ENCODE measurements at regions of chr1 and their contacts with region 1.

Region 1: DNA sequence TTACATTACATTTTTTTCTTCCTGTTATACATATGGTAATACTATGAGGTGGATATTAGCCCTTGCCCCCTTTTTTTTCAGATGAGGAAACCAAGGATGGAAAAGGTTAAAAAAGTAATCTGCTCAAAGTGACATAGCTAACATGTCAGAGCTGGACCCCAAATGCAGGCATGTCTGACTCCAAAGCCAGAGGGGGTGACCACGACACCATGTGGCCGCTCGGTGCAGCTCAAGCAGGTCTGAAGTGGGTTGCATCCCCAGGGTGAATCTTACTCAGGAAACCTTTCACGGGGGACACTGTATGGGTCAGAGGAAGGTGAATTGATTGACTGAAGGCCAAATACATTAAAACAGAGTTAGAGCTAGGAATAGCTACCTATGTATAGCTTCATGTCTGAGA is 34.8 kb downstream of the CD34 start:
- DNase-seq: no peak
- H3K4me3 ChIP-seq: no peak overlapping the region
- H3K4me3 Mint-ChIP-seq: peak overlapping the region in 1 of 8 donors; percentile 59
- H3K27ac ChIP-seq: no peak overlapping the region
- H3K27ac Mint-ChIP-seq: peak overlapping the region in 2 of 7 donors; percentile 18 to 65
- H3K4me1 ChIP-seq: peaks cover 45% of the 10 kb centered on the region
- H3K4me1 Mint-ChIP-seq: peaks cover 40 to 59% (median 47%) of the 10 kb centered on the region in 4 donors
- H3K27me3 ChIP-seq: no peaks in the 10 kb centered on the region
- H3K27me3 Mint-ChIP-seq: no peaks in the 10 kb centered on the region

Region 2: DNA sequence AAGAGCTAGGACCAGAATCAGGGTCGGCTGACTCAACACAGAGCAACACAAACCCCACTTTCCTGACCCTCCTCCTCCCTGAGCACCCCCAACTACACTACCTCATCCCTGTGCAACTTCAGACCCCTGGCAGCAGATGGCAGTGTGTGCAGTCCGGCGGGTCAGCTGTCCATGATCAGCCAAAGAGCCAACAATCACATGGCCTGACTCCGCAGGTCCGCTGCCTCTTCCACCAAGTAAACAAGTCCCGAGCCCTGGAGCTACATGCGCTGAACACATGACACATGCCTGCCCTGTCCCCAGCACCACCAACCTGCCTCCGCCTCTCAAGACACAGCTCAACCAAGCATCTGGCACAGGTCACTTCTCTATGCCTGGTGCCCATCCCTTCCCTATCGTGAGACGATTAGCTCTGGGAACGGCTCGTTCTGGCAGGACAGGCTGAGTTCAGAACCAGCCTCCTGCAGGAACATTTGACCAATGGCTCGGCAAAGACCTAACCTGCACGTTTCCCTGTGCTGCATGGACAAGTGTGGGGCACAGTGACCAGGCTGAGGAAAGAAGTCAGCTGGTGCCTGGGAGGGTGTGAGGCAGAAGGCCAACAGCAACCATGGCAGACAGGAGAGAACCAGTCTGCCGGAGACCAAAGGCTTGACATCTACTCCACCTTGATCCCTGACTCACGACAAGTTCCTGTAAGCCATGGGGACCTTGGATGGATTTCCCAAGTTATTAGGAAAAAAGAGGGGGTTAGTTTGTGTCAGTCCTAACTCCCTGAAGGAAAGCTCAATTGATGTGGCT is 64.0 kb before region 1 on chr1:
- CTCF ChIA-PET with region 1: interaction called, 10 read pairs
- POLR2A ChIA-PET with region 1: no interaction called
- intact Hi-C with region 1: no loop called
- DNase-seq: no peak
- H3K4me3 ChIP-seq: no peak overlapping the region
- H3K4me3 Mint-ChIP-seq: peak overlapping the region in 1 of 8 donors; percentile 17
- H3K27ac ChIP-seq: no peak overlapping the region
- H3K27ac Mint-ChIP-seq: peak overlapping the region in 6 of 7 donors; percentile 13 to 85 (median 61)
- H3K4me1 ChIP-seq: peaks cover 75% of the 10 kb centered on the region
- H3K4me1 Mint-ChIP-seq: peaks cover 51 to 90% (median 74%) of the 10 kb centered on the region in 4 donors
- H3K27me3 ChIP-seq: no peaks in the 10 kb centered on the region
- H3K27me3 Mint-ChIP-seq: no peaks in the 10 kb centered on the region

Region 3: DNA sequence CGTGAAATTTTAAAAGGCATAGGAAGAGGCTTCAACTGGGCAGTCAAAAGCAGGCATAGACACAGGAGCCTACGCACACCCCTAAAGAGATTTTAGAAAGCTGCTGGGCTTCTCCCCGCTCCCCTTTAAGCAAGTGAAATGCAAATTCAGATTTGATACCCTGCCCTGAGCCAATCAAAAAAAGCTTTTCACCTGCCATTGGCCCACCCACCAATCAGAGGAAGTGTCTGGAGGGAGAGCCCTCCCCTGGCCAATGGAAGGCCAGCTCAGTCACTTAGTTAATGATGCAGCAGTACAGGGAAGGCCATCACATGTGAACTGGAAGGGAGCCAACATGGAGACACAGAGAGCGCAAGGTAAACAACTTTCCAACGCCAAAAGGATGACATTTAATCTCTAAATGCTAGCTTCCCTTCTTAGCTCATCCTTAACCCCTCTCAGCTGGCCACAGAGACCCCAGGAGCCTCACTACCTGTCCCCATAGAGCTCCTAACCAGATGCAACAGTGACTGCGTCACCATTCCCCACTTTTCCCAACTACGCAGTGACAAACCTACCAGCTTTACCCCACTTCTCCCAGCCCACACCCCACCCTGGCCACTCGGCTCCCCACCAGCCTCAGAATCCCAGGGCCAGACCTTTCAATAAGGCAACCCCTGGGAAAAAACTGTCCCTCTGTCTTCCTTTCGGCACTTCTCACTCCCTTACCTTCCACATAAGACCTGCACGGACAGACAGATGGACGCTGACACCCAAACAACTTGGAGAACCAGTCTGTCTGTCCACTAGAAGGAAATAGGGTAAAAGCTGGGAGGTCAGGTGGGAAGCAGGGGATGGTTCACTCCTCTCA is 53.3 kb before region 1 on chr1:
- CTCF ChIA-PET with region 1: interaction called, 494 read pairs
- POLR2A ChIA-PET with region 1: interaction called, 16 read pairs
- intact Hi-C with region 1: loop called (anchors 1 kb)
- DNase-seq: peak; percentile 74 to 85 (median 77)
- H3K4me3 ChIP-seq: peak overlapping the region; percentile 56 to 85
- H3K4me3 Mint-ChIP-seq: peak overlapping the region; percentile 84 to 98 (median 94)
- H3K27ac ChIP-seq: peak overlapping the region; percentile 86
- H3K27ac Mint-ChIP-seq: peak overlapping the region; percentile 95 to 100 (median 99)
- H3K4me1 ChIP-seq: peaks cover 87% of the 10 kb centered on the region
- H3K4me1 Mint-ChIP-seq: peaks cover 61 to 94% (median 79%) of the 10 kb centered on the region in 4 donors
- H3K27me3 ChIP-seq: no peaks in the 10 kb centered on the region
- H3K27me3 Mint-ChIP-seq: peaks cover 2 to 4% of the 10 kb centered on the region in 2 donors

Region 4: GRCh38 chr1:207863893-207864535 is 12.1 kb before region 1 on chr1:
- CTCF ChIA-PET with region 1: interaction called, 402 read pairs
- POLR2A ChIA-PET with region 1: interaction called, 157 read pairs
- intact Hi-C with region 1: no loop called
- DNase-seq: peak; percentile 43 to 75 (median 49)
- H3K4me3 ChIP-seq: no peak overlapping the region
- H3K4me3 Mint-ChIP-seq: peak overlapping the region; percentile 45 to 89 (median 72)
- H3K27ac ChIP-seq: peak overlapping the region; percentile 48
- H3K27ac Mint-ChIP-seq: peak overlapping the region; percentile 73 to 95 (median 86)
- H3K4me1 ChIP-seq: peaks cover 88% of the 10 kb centered on the region
- H3K4me1 Mint-ChIP-seq: peaks cover 55 to 74% (median 60%) of the 10 kb centered on the region in 4 donors
- H3K27me3 ChIP-seq: no peaks in the 10 kb centered on the region
- H3K27me3 Mint-ChIP-seq: no peaks in the 10 kb centered on the region

Region 5: DNA sequence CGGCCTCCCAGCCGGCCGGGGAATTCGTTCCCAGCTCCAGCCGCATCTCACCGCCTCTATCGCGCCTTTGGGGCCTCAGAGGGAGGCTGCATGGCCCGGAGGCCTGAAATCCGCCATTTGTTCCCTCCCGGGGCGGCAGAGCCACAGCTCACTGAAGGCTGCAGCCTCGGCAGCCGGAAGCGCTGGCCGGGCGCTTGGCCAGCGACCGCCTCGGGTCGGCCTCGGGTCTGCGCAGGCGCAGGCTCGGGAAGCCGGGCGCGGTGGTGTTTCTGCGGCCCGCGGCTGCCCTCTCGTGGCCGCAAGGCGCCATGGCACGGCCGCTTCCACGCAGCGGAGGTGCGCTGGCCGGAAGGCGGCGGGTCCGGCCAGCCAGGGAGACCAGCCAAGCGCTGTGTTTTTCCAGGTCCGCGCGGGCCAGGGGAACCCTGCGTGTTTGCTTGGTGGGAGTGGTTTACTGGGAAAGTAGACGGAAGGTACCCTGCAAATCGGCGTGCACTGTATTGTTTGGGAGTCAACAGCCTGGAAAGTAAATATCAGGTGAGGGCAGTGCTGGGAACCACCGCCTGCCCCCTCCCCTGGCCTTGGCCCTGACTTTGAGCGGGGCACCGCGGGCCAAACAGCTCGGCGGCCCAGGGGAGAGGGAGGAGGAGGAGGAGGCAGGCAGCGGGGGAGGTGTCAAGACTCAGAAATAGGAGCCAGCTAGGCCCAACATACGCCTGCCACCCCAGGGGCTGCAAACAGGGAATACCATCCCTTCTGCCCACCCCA is 87.5 kb after region 1 on chr1:
- CTCF ChIA-PET with region 1: interaction called, 11 read pairs
- POLR2A ChIA-PET with region 1: interaction called, 18 read pairs
- intact Hi-C with region 1: no loop called
- DNase-seq: peak; percentile 66 to 85 (median 80)
- H3K4me3 ChIP-seq: peak overlapping the region; percentile 27 to 86
- H3K4me3 Mint-ChIP-seq: peak overlapping the region; percentile 81 to 93 (median 87)
- H3K27ac ChIP-seq: peak overlapping the region; percentile 48
- H3K27ac Mint-ChIP-seq: peak overlapping the region in 2 of 7 donors; percentile 17 to 33
- H3K4me1 ChIP-seq: peaks cover 21% of the 10 kb centered on the region
- H3K4me1 Mint-ChIP-seq: peaks cover 4 to 22% (median 14%) of the 10 kb centered on the region in 4 donors
- H3K27me3 ChIP-seq: peaks cover 14% of the 10 kb centered on the region
- H3K27me3 Mint-ChIP-seq: peaks cover 19 to 27% of the 10 kb centered on the region in 2 donors